Activated T-helper 1 cell treated with anti-CD3 and anti-CD28 coated beads, Interleukin-12 subunit alpha, Interleukin-12 subunit beta, Interleukin-2, Interleukin-4 antibody, amounts not matched to agents 30 ng/mL and 10 ng/mL and 1 ng/mL, durations not matched to agents 14 hours and 24 hours and 36 hours (primary cell): ENCODE measurements at regions of chr4 and their contacts with region 1.

Region 1: GRCh38 chr4:139301113-139301820 is at the start of gene NAA15:
- DNase-seq: peak; percentile 97
- H3K4me3 Mint-ChIP-seq: peak within 1 kb of the TSS; percentile 95
- H3K27ac Mint-ChIP-seq: peak within 1 kb of the TSS; percentile 97
- H3K4me1 Mint-ChIP-seq: peaks cover 69% of the 10 kb centered on the region
- H3K27me3 Mint-ChIP-seq: no peaks in the 10 kb centered on the region
- total RNA-seq, gene NAA15: 104 and 110 TPM in 2 replicates

Region 2: GRCh38 chr4:139030614-139031235 is 270.5 kb before region 1 on chr4:
- intact Hi-C with region 1: loop called (anchors 2 kb)
- DNase-seq: peak; percentile 55
- H3K4me3 Mint-ChIP-seq: no peak overlapping the region
- H3K27ac Mint-ChIP-seq: no peak overlapping the region
- H3K4me1 Mint-ChIP-seq: peaks cover 15% of the 10 kb centered on the region
- H3K27me3 Mint-ChIP-seq: no peaks in the 10 kb centered on the region

Region 3: GRCh38 chr4:139266583-139267257 is 34.5 kb before region 1 on chr4:
- intact Hi-C with region 1: loop called (anchors 1 kb)
- DNase-seq: peak; percentile 70
- H3K4me3 Mint-ChIP-seq: peak overlapping the region; percentile 50
- H3K27ac Mint-ChIP-seq: peak overlapping the region; percentile 10
- H3K4me1 Mint-ChIP-seq: peaks cover 21% of the 10 kb centered on the region
- H3K27me3 Mint-ChIP-seq: peaks cover 23% of the 10 kb centered on the region

Region 4: GRCh38 chr4:139319571-139319970 is 18.3 kb after region 1 on chr4:
- intact Hi-C with region 1: no loop called
- DNase-seq: no peak
- H3K4me3 Mint-ChIP-seq: no peak overlapping the region
- H3K27ac Mint-ChIP-seq: no peak overlapping the region
- H3K4me1 Mint-ChIP-seq: peaks cover 50% of the 10 kb centered on the region
- H3K27me3 Mint-ChIP-seq: no peaks in the 10 kb centered on the region

Region 5: DNA sequence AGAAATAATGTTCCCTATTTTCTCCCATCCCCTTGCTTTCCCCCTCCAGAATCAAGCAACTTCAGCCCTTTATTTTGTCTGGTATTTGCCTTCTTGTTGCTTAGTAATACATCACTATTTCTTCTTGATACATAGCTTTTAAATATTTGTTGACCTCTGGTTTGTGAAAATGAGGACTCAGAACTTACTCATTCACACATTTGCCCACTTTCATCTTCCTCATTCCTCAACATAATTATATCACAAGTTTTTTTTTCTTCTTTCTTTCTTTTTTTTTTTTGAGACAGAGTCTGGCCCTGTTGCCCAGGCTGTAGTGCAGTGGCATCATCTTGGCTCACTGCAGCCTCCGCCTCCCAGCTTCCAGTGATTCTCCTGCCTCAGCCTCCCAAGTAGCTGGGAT is 29.9 kb after region 1 on chr4:
- intact Hi-C with region 1: loop called (anchors 2 kb)
- DNase-seq: no peak
- H3K4me3 Mint-ChIP-seq: no peak overlapping the region
- H3K27ac Mint-ChIP-seq: no peak overlapping the region
- H3K4me1 Mint-ChIP-seq: peaks cover 25% of the 10 kb centered on the region
- H3K27me3 Mint-ChIP-seq: no peaks in the 10 kb centered on the region

Region 6: DNA sequence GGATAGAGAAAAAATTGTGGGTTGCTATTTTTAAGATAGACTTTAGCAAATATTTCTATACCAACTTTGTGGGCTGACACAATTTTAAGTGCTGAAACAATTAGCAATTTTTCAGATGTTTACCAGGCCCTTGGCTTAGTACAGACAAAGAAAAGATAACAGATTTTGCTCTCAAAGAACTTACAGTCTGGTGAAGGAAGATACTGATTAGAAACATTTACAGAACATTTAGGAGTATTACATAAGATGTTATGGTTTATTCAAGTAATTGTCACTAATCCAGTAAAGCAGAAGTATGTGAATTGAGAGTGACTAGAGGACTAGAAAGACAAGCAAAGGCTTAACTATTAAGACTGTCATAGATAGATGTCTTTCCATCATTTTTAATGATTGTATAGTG is 36.3 kb after region 1 on chr4:
- intact Hi-C with region 1: loop called (anchors 5 kb)
- DNase-seq: no peak
- H3K4me3 Mint-ChIP-seq: no peak overlapping the region
- H3K27ac Mint-ChIP-seq: no peak overlapping the region
- H3K4me1 Mint-ChIP-seq: peaks cover 13% of the 10 kb centered on the region
- H3K27me3 Mint-ChIP-seq: no peaks in the 10 kb centered on the region

Region 7: DNA sequence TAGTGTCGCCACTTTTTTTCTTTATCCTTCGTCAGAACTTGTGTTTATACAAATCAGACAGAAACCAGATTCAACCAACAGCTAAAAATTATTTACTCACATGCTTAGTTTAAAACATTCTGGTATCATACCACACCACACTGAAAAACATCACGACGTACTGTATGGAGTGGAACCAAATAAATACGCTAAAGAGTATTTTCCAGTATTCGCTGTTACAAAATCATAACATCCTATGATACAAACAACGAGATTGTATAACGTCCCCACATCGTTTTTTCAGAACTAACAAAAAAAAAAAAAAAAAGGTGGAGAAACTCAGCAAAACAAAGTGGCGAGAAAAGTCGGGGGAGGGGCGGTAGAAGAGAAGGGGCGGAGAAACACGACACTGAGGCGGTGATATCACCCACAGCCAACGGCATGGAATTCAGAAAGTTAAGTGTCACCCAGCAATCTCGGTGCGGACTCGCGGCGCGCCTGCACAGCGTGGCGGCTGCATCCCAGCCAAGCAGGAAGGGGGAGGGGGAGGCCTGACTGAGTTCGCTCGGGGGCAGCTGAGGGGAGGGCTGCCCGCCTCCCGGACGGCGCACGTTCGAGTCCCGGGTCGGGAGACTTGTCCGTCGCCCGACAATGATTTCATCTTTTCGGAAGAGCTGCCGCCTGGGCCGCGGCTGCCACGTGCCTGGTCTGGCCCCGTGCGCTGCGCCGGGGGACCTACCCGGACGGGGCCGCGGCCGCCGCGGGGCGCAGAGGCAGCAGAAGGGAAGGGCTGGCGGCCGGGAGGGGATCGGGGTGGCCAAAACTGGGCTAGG is 253.8 kb after region 1 on chr4:
- intact Hi-C with region 1: loop called (anchors 2 kb)
- DNase-seq: peak; percentile 78
- H3K4me3 Mint-ChIP-seq: peak overlapping the region; percentile 93
- H3K27ac Mint-ChIP-seq: peak overlapping the region; percentile 96
- H3K4me1 Mint-ChIP-seq: peaks cover 47% of the 10 kb centered on the region
- H3K27me3 Mint-ChIP-seq: peaks cover 13% of the 10 kb centered on the region

Region 8: DNA sequence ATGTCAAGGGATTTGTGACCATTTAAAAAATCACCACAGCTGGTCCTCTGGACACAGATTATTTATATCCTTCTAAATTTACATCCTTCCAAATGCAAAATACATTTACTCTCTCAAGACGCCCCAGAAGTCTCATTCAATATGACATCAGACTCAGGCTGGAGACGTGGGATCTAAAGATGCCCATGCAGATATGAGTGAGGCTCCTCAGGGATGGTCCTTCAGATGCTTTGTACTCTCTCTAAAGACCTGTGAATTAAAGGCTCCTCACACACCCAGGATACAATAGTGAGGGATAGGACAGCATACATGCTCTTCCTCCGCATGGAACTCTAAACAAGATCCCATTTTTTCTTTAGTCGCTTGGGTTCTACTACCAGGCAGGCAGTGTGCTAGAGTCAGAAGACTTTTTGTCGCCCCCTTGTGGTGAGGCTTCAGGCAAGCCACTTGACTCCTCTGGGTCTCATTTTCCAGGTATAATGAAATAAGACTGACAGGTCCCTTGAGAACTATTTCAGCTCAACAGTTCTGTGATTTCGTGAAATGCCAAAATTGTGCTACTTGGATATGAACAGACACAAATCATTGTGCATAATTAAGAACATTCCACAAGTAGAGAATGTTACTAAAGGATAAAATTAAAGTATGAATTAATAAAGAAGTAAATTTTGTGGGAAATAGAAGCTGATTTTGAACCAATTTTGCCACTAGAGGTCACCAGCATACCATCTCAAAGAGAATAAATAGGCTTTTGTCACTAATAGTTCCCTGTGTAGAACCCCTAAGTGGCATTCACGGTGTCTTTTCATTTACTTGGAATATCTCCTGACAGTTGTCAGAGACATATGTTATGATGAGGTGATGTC is 1058.5 kb after region 1 on chr4:
- intact Hi-C with region 1: no loop called
- DNase-seq: peak; percentile 50
- H3K4me3 Mint-ChIP-seq: no peak overlapping the region
- H3K27ac Mint-ChIP-seq: no peak overlapping the region
- H3K4me1 Mint-ChIP-seq: no peaks in the 10 kb centered on the region
- H3K27me3 Mint-ChIP-seq: peaks cover 4% of the 10 kb centered on the region